ENCODE measurements at regions of chr19 and their contacts with region 1.

Region 1: GRCh38 chr19:55160128-55160985 is 2.8 kb upstream of the TNNI3 start:
- H3K4me3 ChIP-seq: no peak overlapping the region
- H3K27ac ChIP-seq: 0 out of 2 replicates have a peak overlapping the region, but pooled peaks have one; percentile 10
- H3K4me1 ChIP-seq: peaks cover 6% of the 10 kb centered on the region
- CTCF ChIP-seq: peak; percentile 94

Region 2: GRCh38 chr19:55132453-55133129 is 27.8 kb before region 1 on chr19:
- CTCF ChIA-PET with region 1: interaction called, 10 read pairs
- POLR2A ChIA-PET with region 1: no interaction called
- H3K4me3 ChIP-seq: no peak overlapping the region
- H3K27ac ChIP-seq: no peak overlapping the region
- H3K4me1 ChIP-seq: no peaks in the 10 kb centered on the region
- CTCF ChIP-seq: no peak

Region 3: GRCh38 chr19:55173714-55174409 is 13.5 kb after region 1 on chr19:
- CTCF ChIA-PET with region 1: interaction called, 22 read pairs
- POLR2A ChIA-PET with region 1: no interaction called
- H3K4me3 ChIP-seq: peak overlapping the region; percentile 50
- H3K27ac ChIP-seq: peak overlapping the region; percentile 7; the same call in 1 of the 2 replicates
- H3K4me1 ChIP-seq: peaks cover 7% of the 10 kb centered on the region
- CTCF ChIP-seq: peak; percentile 44; the same call in 1 of the 2 replicates